HCT116 (cell line): ENCODE measurements at regions of chr6 and their contacts with region 1.

Region 1: GRCh38 chr6:26156076-26156849 is 69.0 kb downstream of the HFE start:
- DNase-seq: peak; percentile 73
- ATAC-seq: peak; percentile 60
- H3K4me3 ChIP-seq: peak overlapping the region; percentile 69 to 75
- H3K27ac ChIP-seq: peak overlapping the region; percentile 88
- H3K4me1 ChIP-seq: peaks cover 20 to 71% of the 10 kb centered on the region in 2 experiments
- H3K27me3 ChIP-seq: no peaks in the 10 kb centered on the region
- CTCF ChIP-seq: no peak
- POLR2A ChIP-seq: peak; percentile 98
- RAD21 ChIP-seq: peak; percentile 16; the same call in 1 of the 2 replicates

Region 2: GRCh38 chr6:24600903-24601302 is 1555.4 kb before region 1 on chr6:
- CTCF ChIA-PET with region 1: no interaction called
- POLR2A ChIA-PET with region 1: no interaction called
- RAD21 ChIA-PET with region 1: no interaction called
- intact Hi-C with region 1: no loop called
- DNase-seq: no peak
- ATAC-seq: no peak
- H3K4me3 ChIP-seq: no peak overlapping the region
- H3K27ac ChIP-seq: no peak overlapping the region
- H3K4me1 ChIP-seq: no peaks in the 10 kb centered on the region
- H3K27me3 ChIP-seq: no peaks in the 10 kb centered on the region
- CTCF ChIP-seq: peak in 2 of 3 experiments; percentile 37 to 63; a peak in 3 of 6 replicates
- POLR2A ChIP-seq: no peak
- RAD21 ChIP-seq: peak; percentile 11; the same call in 1 of the 2 replicates

Region 3: DNA sequence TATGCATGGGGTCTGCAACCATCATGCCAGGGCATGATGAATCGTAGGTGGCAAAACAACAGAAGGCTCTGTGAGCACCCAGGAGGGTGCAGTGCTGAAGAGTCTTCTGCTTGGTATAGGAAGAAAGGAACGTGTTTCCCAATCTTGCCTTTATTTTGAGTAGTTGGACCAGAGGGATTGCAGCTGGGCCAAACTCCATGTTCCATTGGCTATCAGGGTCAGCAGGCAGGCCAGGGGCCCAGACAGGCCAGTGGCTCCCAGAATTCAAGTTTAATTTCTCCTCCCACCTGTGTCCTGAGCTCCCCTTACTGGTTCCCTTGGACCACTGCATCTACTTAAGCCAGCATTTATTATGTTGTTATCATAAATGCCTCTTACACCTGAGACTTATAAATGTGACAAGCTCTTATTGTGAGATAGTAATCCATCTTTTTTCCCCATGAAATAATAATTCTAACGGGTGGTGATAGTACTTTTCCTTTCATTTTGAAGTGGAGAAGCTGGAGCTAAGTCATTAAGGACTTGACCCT is 194.6 kb before region 1 on chr6:
- CTCF ChIA-PET with region 1: no interaction called
- POLR2A ChIA-PET with region 1: no interaction called
- RAD21 ChIA-PET with region 1: no interaction called
- intact Hi-C with region 1: no loop called
- DNase-seq: no peak
- ATAC-seq: peak; percentile 54
- H3K4me3 ChIP-seq: peak overlapping the region in 1 of 2 experiments; percentile 63; a peak in 2 of 4 replicates
- H3K27ac ChIP-seq: peak overlapping the region; percentile 57
- H3K4me1 ChIP-seq: peaks cover 18 to 29% of the 10 kb centered on the region in 2 experiments
- H3K27me3 ChIP-seq: no peaks in the 10 kb centered on the region
- CTCF ChIP-seq: peak in 1 of 3 experiments; percentile 10; a peak in 1 of 6 replicates
- POLR2A ChIP-seq: no peak
- RAD21 ChIP-seq: no peak

Region 4: GRCh38 chr6:26054857-26055669 is 101.2 kb before region 1 on chr6:
- CTCF ChIA-PET with region 1: no interaction called
- POLR2A ChIA-PET with region 1: interaction called, 11 read pairs
- RAD21 ChIA-PET with region 1: no interaction called
- intact Hi-C with region 1: no loop called
- DNase-seq: peak; percentile 98
- ATAC-seq: peak; percentile 70
- H3K4me3 ChIP-seq: peak overlapping the region; percentile 52 to 73
- H3K27ac ChIP-seq: peak overlapping the region; percentile 85
- H3K4me1 ChIP-seq: peaks cover 41 to 68% of the 10 kb centered on the region in 2 experiments
- H3K27me3 ChIP-seq: no peaks in the 10 kb centered on the region
- CTCF ChIP-seq: 0 out of 6 replicates have a peak, but pooled peaks of 1 of the 3 experiments have one; percentile 5
- POLR2A ChIP-seq: no peak
- RAD21 ChIP-seq: peak; percentile 30

Region 5: GRCh38 chr6:26122793-26123674 is 33.2 kb before region 1 on chr6:
- CTCF ChIA-PET with region 1: interaction called, 7 read pairs
- POLR2A ChIA-PET with region 1: interaction called, 571 read pairs
- RAD21 ChIA-PET with region 1: interaction called, 5 to 8 read pairs
- intact Hi-C with region 1: loop called (anchors 1 kb)
- DNase-seq: peak; percentile 99
- ATAC-seq: peak; percentile 55
- H3K4me3 ChIP-seq: peak overlapping the region; percentile 70 to 91
- H3K27ac ChIP-seq: peak overlapping the region; percentile 99
- H3K4me1 ChIP-seq: peaks cover 47 to 69% of the 10 kb centered on the region in 2 experiments
- H3K27me3 ChIP-seq: no peaks in the 10 kb centered on the region
- CTCF ChIP-seq: no peak
- POLR2A ChIP-seq: peak; percentile 98
- RAD21 ChIP-seq: peak; percentile 30

Region 6: DNA sequence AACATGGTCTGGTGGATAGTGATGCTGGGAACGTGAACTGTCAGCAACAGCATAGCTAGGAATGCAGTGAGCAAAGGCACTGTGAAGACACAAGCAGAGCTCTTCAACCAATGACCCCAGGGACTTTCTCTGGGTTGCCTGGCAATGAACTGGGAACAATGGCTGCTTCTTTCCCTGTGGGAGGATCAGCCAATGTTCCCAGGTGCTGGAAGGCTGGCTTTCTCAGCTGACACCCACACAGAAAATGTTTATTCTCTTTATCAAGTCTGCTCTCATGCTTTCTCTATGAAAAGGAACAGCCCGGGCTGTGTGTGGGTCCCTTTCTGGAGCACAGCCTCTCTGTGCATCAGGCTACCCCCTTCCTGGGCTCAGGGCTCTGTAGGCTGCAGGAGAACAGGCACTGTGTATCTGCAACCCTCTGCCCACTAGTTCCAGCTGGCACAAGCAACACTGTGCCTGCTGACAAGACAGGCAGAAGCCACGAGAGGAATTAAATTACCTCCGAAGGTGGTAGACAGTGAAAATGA is 14.8 kb before region 1 on chr6:
- CTCF ChIA-PET with region 1: no interaction called
- POLR2A ChIA-PET with region 1: interaction called, 22 read pairs
- RAD21 ChIA-PET with region 1: no interaction called
- intact Hi-C with region 1: no loop called
- DNase-seq: no peak
- ATAC-seq: no peak
- H3K4me3 ChIP-seq: no peak overlapping the region
- H3K27ac ChIP-seq: no peak overlapping the region
- H3K4me1 ChIP-seq: no peaks in the 10 kb centered on the region
- H3K27me3 ChIP-seq: no peaks in the 10 kb centered on the region
- CTCF ChIP-seq: no peak
- POLR2A ChIP-seq: no peak
- RAD21 ChIP-seq: no peak

Region 7: DNA sequence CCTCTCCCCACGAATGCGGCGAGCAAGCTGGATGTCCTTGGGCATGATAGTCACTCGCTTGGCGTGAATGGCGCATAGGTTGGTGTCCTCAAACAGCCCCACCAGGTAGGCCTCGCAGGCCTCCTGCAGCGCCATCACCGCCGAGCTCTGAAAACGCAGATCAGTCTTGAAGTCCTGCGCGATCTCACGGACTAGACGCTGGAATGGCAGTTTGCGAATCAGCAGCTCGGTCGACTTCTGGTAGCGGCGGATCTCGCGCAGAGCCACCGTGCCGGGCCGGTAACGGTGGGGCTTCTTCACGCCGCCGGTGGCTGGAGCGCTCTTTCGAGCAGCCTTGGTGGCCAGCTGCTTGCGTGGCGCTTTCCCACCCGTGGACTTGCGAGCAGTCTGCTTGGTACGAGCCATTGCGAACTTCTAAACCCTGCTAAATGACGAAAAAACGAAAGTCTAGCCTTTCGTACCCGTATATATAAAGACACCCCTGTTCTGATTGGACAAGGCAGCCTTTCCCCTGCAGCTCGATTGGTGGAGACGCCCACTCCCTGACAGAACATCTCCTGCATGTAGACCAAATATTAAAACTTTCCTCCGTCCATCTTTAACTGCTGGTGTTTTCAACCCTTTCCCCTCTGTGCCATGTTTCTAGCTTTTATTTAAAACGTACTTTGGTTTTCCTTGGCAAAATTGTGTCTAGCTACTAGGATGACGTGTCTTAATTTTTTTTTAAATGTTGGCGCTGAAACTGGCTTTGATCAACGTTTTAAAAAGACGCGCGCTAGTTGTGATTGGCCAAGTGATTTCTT is 40.8 kb after region 1 on chr6:
- CTCF ChIA-PET with region 1: no interaction called
- POLR2A ChIA-PET with region 1: interaction called, 179 read pairs
- RAD21 ChIA-PET with region 1: no interaction called
- intact Hi-C with region 1: loop called (anchors 2 kb)
- DNase-seq: peak; percentile 75
- ATAC-seq: peak; percentile 41
- H3K4me3 ChIP-seq: peak overlapping the region; percentile 70 to 76
- H3K27ac ChIP-seq: peak overlapping the region; percentile 98
- H3K4me1 ChIP-seq: peaks cover 13 to 37% of the 10 kb centered on the region in 2 experiments
- H3K27me3 ChIP-seq: no peaks in the 10 kb centered on the region
- CTCF ChIP-seq: no peak
- POLR2A ChIP-seq: peak; percentile 92
- RAD21 ChIP-seq: no peak

Region 8: DNA sequence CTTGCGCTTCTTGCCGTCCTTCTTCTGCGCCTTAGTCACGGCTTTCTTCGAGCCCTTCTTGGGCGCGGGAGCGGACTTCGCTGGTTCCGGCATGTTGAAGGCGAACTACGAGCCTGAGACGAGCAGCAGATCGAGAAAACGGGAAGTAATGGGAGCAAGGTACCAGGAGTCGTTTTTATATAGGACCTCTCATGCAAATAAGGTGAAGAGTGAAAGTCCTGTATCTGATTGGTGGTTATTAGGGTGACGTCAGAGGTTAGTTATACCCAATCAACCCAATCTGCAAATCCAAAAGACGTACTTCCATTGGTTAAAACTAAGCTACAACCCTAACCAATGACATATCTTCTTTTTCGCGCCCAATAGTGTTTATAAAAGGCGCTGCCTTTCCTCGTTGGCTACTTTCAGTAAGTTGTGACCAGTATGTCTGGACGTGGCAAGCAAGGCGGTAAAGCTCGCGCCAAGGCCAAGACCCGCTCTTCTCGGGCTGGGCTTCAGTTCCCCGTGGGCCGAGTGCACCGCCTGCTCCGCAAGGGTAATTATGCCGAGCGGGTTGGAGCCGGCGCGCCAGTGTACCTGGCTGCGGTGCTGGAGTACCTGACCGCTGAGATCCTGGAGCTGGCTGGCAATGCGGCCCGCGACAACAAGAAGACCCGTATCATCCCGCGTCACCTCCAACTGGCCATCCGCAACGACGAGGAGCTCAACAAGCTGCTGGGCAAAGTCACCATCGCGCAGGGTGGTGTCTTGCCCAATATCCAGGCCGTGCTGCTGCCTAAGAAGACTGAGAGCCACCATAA is 990.6 kb after region 1 on chr6:
- CTCF ChIA-PET with region 1: interaction called, 3 read pairs
- POLR2A ChIA-PET with region 1: interaction called, 15 read pairs
- RAD21 ChIA-PET with region 1: no interaction called
- intact Hi-C with region 1: loop called (anchors 2 kb)
- DNase-seq: peak; percentile 99
- ATAC-seq: peak; percentile 71
- H3K4me3 ChIP-seq: peak overlapping the region; percentile 69 to 70
- H3K27ac ChIP-seq: peak overlapping the region; percentile 97
- H3K4me1 ChIP-seq: peaks cover 26 to 55% of the 10 kb centered on the region in 2 experiments
- H3K27me3 ChIP-seq: no peaks in the 10 kb centered on the region
- CTCF ChIP-seq: no peak
- POLR2A ChIP-seq: peak; percentile 93
- RAD21 ChIP-seq: no peak